Calu3 (cell line): ENCODE measurements at regions of chr5 and their contacts with region 1.

Region 1: DNA sequence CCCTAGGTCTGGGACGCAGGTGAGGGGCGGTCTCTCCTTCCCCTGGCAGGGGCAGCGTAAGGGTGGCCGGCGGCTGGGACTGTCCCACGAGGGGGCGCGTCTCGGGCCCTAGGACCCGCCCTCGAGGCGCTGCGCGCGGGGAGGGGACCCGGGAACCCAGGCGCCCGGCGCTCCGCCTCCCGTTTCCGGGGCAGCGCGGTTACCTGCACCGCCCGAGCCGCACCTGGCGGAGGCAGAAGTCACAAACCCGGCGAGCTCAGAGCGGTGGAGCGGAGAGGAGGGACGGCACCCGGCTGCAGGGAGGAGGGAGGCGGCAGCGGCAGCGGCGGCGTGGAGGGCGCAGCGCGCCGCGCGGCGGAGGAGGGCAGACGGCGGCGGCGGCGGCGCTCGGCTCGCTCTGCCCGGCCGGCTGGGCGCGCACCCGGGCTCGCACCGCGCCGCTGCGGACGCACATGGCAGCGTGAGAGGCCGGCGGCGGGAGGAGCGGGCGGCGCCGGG is at the start of gene WWC1:
- DNase-seq: peak; percentile 99
- H3K4me3 Mint-ChIP-seq: peak within 1 kb of the TSS; percentile 97
- H3K27ac Mint-ChIP-seq: peak within 1 kb of the TSS; percentile 85
- H3K4me1 Mint-ChIP-seq: peaks cover 81% of the 10 kb centered on the region
- H3K27me3 Mint-ChIP-seq: no peaks in the 10 kb centered on the region
- CTCF ChIP-seq: peak; percentile 30
- total RNA-seq, gene WWC1: 190 TPM in 2 replicates

Region 2: DNA sequence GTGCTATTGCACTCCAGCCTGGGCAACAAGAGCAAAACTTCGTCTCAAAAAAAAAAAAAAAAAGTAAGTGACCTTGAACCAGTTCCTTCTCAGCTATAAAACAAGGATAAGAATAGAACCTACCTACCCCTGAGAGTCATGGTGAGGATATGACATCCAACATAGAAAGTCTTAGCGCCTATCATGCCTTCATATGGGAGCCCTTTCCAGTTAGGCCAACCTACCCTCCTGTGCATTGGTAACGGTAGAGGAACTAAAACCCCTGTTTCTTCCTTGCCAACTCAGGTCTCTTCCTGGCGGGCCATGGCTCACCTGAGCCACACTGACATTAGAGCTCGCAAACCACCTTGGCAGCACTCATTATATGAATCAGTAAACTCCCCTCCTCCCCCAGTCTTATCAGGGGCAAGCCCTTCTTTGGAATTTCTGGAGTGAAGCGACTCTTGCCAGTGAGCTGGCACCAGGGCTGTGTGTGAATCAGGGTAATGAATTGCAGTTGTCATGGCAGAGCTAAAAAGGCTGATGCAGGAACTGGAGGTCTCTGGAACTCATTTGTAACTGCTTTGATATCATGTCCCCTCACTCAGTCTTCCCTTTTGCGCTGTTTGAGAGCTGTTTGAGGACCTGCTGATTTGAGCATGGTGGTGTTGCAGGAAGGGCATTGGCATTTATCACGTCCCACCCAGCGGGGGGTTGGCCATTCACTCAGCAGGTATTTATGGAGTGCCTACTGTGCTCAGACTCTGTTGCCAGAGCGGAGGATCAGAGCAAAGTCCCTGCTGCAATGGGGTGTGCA is 10.3 kb after region 1 on chr5:
- CTCF ChIA-PET with region 1: interaction called, 37 read pairs
- intact Hi-C with region 1: no loop called
- DNase-seq: peak; percentile 90
- H3K4me3 Mint-ChIP-seq: peak overlapping the region; percentile 71
- H3K27ac Mint-ChIP-seq: peak overlapping the region; percentile 97
- H3K4me1 Mint-ChIP-seq: peaks cover 90% of the 10 kb centered on the region
- H3K27me3 Mint-ChIP-seq: no peaks in the 10 kb centered on the region
- CTCF ChIP-seq: no peak

Region 3: GRCh38 chr5:168328814-168329213 is 37.3 kb after region 1 on chr5:
- CTCF ChIA-PET with region 1: interaction called, 12 read pairs
- intact Hi-C with region 1: loop called (anchors 1 kb)
- DNase-seq: peak; percentile 78
- H3K4me3 Mint-ChIP-seq: peak overlapping the region; percentile 45
- H3K27ac Mint-ChIP-seq: peak overlapping the region; percentile 28
- H3K4me1 Mint-ChIP-seq: peaks cover 95% of the 10 kb centered on the region
- H3K27me3 Mint-ChIP-seq: no peaks in the 10 kb centered on the region
- CTCF ChIP-seq: no peak

Region 4: DNA sequence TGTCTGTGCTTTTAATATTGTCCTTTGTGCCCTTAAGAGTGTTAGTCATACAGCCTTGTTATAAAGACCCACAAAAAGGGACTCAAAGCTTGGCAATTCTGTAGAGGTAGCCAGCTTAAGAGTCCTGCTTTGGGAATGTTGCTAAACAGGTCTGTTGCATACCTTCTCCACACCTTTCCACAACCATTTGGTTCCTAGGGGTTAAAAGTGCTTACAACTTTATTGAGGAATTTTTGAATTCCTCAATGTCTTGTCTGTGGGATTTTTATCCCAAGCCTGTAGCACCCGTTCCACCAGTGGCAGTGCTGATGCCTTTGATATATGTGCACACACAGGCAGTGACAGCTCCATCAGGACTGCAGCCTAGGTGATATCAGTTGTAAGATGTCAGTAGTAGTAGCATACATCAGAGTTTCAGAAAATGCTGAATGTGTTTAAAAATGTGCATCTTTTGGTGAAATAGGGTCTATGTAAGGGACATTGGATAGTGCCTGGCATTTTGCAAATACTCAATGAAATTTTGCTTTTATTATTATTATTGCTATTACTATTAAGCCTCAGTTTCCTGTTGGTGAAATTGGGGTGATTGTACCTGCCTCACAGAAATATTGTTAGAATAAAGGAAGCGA is 68.4 kb after region 1 on chr5:
- CTCF ChIA-PET with region 1: interaction called, 11 read pairs
- intact Hi-C with region 1: loop called (anchors 2 kb)
- DNase-seq: peak; percentile 48
- H3K4me3 Mint-ChIP-seq: no peak overlapping the region
- H3K27ac Mint-ChIP-seq: peak overlapping the region; percentile 46
- H3K4me1 Mint-ChIP-seq: peaks cover 97% of the 10 kb centered on the region
- H3K27me3 Mint-ChIP-seq: no peaks in the 10 kb centered on the region
- CTCF ChIP-seq: no peak

Region 5: GRCh38 chr5:168404365-168404764 is 112.9 kb after region 1 on chr5:
- CTCF ChIA-PET with region 1: interaction called, 8 read pairs
- intact Hi-C with region 1: loop called (anchors 5 kb)
- DNase-seq: no peak
- H3K4me3 Mint-ChIP-seq: no peak overlapping the region
- H3K27ac Mint-ChIP-seq: no peak overlapping the region
- H3K4me1 Mint-ChIP-seq: peaks cover 45% of the 10 kb centered on the region
- H3K27me3 Mint-ChIP-seq: no peaks in the 10 kb centered on the region
- CTCF ChIP-seq: no peak

Region 6: GRCh38 chr5:168472329-168472728 is 180.8 kb after region 1 on chr5:
- CTCF ChIA-PET with region 1: no interaction called
- intact Hi-C with region 1: no loop called
- DNase-seq: peak; percentile 8
- H3K4me3 Mint-ChIP-seq: no peak overlapping the region
- H3K27ac Mint-ChIP-seq: peak overlapping the region; percentile 51
- H3K4me1 Mint-ChIP-seq: peaks cover 17% of the 10 kb centered on the region
- H3K27me3 Mint-ChIP-seq: no peaks in the 10 kb centered on the region
- CTCF ChIP-seq: no peak